ENCODE measurements at regions of chr16 and their contacts with region 1.

Region 1: DNA sequence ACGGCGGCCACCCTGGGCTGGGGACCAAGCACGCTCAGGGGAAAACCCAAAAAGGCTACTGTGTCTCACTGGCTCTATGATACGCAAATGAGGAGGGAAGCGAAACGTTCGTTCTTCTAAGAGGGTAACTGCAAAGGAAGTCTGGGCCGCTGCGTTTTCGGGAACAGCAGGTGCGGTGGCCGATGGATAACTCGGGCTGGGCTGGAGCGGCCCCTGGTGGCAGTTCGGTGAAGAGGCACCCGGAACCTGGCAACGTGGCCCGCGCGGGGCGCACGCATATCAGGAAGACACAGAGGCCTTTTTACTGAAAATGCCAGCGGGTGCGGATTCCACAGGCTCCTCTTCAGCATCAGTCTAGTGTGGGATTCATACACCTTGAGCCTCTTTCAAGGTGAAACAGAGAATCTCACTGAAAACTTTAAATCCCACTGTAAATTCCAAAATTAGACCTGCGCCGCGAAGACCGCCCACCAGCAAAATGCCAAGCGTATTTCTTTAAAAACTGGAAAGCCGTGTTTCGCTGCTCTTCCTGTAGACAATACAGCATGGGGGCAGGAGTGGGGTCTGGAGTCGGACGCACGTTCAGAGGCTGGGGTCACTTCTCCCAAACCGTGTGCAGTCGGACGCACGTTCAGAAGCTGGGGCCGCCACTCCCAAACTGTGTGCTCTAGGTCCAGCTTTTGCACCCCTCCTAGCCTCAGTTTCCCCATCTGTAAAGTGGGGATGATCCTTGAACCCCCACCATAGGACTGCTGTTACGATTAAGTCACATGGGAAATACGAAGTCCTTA is 44.4 kb upstream of the METTL9 start:
- DNase-seq: peak; percentile 98
- ATAC-seq: peak; percentile 94
- H3K4me3 Mint-ChIP-seq: peak overlapping the region; percentile 83
- H3K27ac Mint-ChIP-seq: peak overlapping the region; percentile 94
- H3K4me1 Mint-ChIP-seq: peaks cover 35% of the 10 kb centered on the region
- H3K27me3 Mint-ChIP-seq: no peaks in the 10 kb centered on the region
- CTCF ChIP-seq: peak; percentile 91

Region 2: GRCh38 chr16:21158208-21159110 is 396.5 kb before region 1 on chr16 and contains the start of gene LDAF1:
- CTCF ChIA-PET with region 1: no interaction called
- POLR2A ChIA-PET with region 1: no interaction called
- intact Hi-C with region 1: loop called (anchors 1 kb)
- DNase-seq: peak; percentile 81
- ATAC-seq: peak; percentile 93
- H3K4me3 Mint-ChIP-seq: peak within 1 kb of the TSS; percentile 92
- H3K27ac Mint-ChIP-seq: peak within 1 kb of the TSS; percentile 79
- H3K4me1 Mint-ChIP-seq: peaks cover 20% of the 10 kb centered on the region
- H3K27me3 Mint-ChIP-seq: no peaks in the 10 kb centered on the region
- CTCF ChIP-seq: no peak
- total RNA-seq, gene LDAF1: 16.5 and 17.2 TPM in 2 replicates

Region 3: GRCh38 chr16:21277927-21278706 is 276.9 kb before region 1 on chr16 and contains the start of gene CRYM:
- CTCF ChIA-PET with region 1: no interaction called
- POLR2A ChIA-PET with region 1: no interaction called
- intact Hi-C with region 1: loop called (anchors 2 kb)
- DNase-seq: peak; percentile 76
- ATAC-seq: peak; percentile 95
- H3K4me3 Mint-ChIP-seq: peak within 1 kb of the TSS; percentile 79
- H3K27ac Mint-ChIP-seq: no peak within 1 kb of the TSS
- H3K4me1 Mint-ChIP-seq: peaks cover 46% of the 10 kb centered on the region
- H3K27me3 Mint-ChIP-seq: peaks cover 16% of the 10 kb centered on the region
- CTCF ChIP-seq: peak; percentile 42
- total RNA-seq, gene CRYM: 4.2 and 4.5 TPM in 2 replicates

Region 4: GRCh38 chr16:21523411-21524067 is 31.5 kb before region 1 on chr16:
- CTCF ChIA-PET with region 1: no interaction called
- POLR2A ChIA-PET with region 1: interaction called, 15 read pairs
- intact Hi-C with region 1: loop called (anchors 1 kb)
- DNase-seq: no peak
- ATAC-seq: no peak
- H3K4me3 Mint-ChIP-seq: no peak overlapping the region
- H3K27ac Mint-ChIP-seq: peak overlapping the region; percentile 39
- H3K4me1 Mint-ChIP-seq: peaks cover 3% of the 10 kb centered on the region
- H3K27me3 Mint-ChIP-seq: no peaks in the 10 kb centered on the region
- CTCF ChIP-seq: no peak

Region 5: DNA sequence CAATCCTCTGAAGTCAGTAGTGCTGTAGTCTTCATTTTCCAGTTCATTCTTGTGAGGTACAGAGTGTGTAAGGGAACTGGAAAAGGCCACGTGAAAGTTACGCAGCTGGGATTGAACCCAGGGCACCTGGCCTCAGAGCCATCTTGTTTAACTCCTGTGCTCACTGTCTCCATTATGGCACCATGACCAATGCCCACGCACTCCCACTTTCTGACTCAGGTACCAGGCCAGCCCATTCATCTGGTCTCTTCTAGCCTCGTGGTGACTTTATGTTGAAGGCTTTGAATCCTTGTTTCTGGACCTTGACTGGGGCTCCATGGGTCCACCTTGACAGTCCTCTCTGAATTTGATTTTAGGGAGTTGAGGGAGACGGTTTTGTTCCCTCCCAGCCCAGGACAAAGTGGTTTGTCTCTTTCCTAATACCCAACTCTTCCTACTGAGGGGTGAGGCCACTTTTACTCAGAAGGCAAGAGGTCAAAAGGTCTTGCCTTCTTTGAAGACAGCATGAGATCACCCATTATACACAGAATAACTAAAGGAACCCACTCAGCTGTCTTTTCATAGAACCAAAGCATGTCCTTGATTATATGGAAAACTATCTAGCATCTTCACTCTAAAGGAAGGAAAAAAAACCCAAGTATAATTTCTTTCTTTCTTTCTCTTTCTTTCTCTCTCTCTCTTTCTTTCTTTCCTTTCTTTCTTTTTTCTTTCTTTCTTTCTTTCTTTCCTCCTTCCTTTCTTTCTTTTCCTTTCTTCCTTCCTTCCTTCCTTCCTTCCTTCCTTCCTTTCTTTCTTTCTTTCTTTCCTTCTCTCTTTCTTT is 158.8 kb after region 1 on chr16:
- CTCF ChIA-PET with region 1: no interaction called
- POLR2A ChIA-PET with region 1: no interaction called
- intact Hi-C with region 1: no loop called
- DNase-seq: no peak
- ATAC-seq: no peak
- H3K4me3 Mint-ChIP-seq: no peak overlapping the region
- H3K27ac Mint-ChIP-seq: peak overlapping the region; percentile 14
- H3K4me1 Mint-ChIP-seq: no peaks in the 10 kb centered on the region
- H3K27me3 Mint-ChIP-seq: no peaks in the 10 kb centered on the region
- CTCF ChIP-seq: no peak

Region 6: GRCh38 chr16:23060458-23061320 is 1505.7 kb after region 1 on chr16:
- CTCF ChIA-PET with region 1: no interaction called
- POLR2A ChIA-PET with region 1: no interaction called
- intact Hi-C with region 1: loop called (anchors 1 kb)
- DNase-seq: peak; percentile 31
- ATAC-seq: peak; percentile 91
- H3K4me3 Mint-ChIP-seq: peak overlapping the region; percentile 22
- H3K27ac Mint-ChIP-seq: no peak overlapping the region
- H3K4me1 Mint-ChIP-seq: peaks cover 5% of the 10 kb centered on the region
- H3K27me3 Mint-ChIP-seq: peaks cover 13% of the 10 kb centered on the region
- CTCF ChIP-seq: peak; percentile 41